ENCODE measurements at regions of chr17 and their contacts with region 1.

Region 1: DNA sequence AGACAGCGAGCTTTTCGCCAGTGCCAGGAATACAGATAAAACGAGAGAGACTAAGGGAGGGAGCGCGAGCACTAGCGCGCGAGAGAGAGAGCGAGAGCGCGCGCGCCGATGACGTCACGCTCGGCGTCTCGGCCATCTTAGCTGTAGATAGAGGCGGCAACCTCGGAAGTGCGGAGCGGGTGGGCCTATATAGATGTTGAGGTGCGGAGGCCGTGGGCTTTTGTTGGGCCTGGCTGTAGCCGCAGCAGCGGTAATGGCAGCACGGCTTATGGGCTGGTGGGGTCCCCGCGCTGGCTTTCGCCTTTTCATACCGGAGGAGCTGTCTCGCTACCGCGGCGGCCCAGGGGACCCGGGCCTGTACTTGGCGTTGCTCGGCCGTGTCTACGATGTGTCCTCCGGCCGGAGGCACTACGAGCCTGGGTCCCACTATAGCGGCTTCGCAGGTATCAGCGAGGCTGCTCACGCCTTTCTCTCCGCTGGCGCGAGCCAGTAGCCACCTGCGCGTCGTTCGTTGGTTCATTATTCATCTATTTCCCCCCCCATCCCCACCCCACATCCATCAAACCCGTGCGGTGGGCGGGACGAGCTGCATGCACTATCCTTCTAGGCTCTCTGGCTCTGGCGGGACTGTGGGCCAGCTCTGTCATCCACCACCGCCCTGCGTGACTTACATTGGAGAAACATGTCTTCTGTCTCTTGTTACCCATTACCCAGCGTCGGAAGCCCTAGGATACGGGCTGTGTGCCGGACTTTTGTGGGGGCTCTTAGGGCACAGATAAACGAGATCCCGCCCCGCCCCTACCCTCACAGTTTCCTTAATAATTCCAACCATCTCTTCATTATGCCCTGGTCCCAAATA is 795 bp downstream of the CYB5D2 start:
- DNase-seq: peak; percentile 81 to 86
- H3K4me3 ChIP-seq: peak overlapping the region; percentile 89
- H3K27ac ChIP-seq: peak overlapping the region; percentile 98
- H3K4me1 ChIP-seq: peaks cover 14% of the 10 kb centered on the region
- H3K27me3 ChIP-seq: no peaks in the 10 kb centered on the region
- CTCF ChIP-seq: no peak

Region 2: GRCh38 chr17:3004133-3004801 is 1139.5 kb before region 1 on chr17:
- CTCF ChIA-PET with region 1: no interaction called
- POLR2A ChIA-PET with region 1: no interaction called
- intact Hi-C with region 1: no loop called
- DNase-seq: peak; percentile 89 to 99
- H3K4me3 ChIP-seq: peak overlapping the region; percentile 6; the same call in 1 of the 2 replicates
- H3K27ac ChIP-seq: peak overlapping the region; percentile 65
- H3K4me1 ChIP-seq: peaks cover 22% of the 10 kb centered on the region
- H3K27me3 ChIP-seq: no peaks in the 10 kb centered on the region
- CTCF ChIP-seq: no peak

Region 3: GRCh38 chr17:3558603-3559269 is 585.1 kb before region 1 on chr17:
- CTCF ChIA-PET with region 1: no interaction called
- POLR2A ChIA-PET with region 1: no interaction called
- intact Hi-C with region 1: no loop called
- DNase-seq: peak; percentile 57 to 74
- H3K4me3 ChIP-seq: peak overlapping the region; percentile 7; the same call in 1 of the 2 replicates
- H3K27ac ChIP-seq: peak overlapping the region; percentile 60
- H3K4me1 ChIP-seq: peaks cover 29% of the 10 kb centered on the region
- H3K27me3 ChIP-seq: no peaks in the 10 kb centered on the region
- CTCF ChIP-seq: no peak

Region 4: DNA sequence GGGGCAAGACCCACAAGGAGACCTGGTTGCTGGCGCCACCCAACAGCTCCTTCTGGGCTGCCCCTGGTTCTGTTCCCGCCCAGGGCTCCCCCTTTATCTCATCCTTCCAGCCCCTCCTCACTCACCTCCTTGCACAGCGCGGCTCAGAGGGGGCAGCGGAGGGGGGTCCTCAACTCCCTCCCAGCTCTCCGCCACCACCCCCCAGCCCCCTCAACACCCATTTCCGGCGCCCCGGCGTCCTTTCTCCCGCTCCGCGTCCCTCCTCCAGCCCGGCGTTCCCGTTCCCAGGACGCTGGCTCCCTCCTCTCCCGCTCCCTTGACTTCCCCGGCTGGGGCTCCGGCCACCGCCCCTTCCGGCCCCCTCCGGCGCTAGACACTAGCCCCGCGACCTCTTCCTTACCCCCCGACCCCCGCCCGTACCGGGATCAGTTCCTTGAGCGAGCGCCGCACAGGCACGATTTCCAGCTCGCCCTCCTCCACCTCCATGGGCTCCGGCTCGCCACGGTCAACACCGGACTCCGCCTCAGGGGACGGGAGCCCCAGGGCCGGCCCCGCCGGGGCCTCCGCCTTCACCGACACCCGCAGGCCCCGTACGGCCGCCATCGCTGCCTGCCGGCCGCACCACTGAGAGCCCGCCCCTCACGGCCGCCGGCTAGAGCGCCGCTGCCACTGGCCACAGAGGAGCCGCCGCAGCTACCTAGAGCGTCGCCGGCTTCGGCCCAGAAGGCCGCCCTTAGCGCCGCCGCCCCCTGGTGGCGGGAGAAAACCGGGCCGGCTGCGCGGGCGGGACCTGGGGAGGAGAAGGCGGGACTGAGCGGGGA is 298.0 kb before region 1 on chr17 and contains the start of gene NCBP3:
- CTCF ChIA-PET with region 1: interaction called, 3 read pairs
- POLR2A ChIA-PET with region 1: no interaction called
- intact Hi-C with region 1: loop called (anchors 10 kb)
- DNase-seq: peak; percentile 83 to 94
- H3K4me3 ChIP-seq: peak within 1 kb of the TSS; percentile 97
- H3K27ac ChIP-seq: peak within 1 kb of the TSS; percentile 51
- H3K4me1 ChIP-seq: peaks cover 10% of the 10 kb centered on the region
- H3K27me3 ChIP-seq: no peaks in the 10 kb centered on the region
- CTCF ChIP-seq: peak; percentile 95
- total RNA-seq, gene NCBP3: 48.2 and 58.5 TPM in 2 replicates

Region 5: GRCh38 chr17:3935140-3935542 is 208.7 kb before region 1 on chr17:
- CTCF ChIA-PET with region 1: no interaction called
- POLR2A ChIA-PET with region 1: no interaction called
- intact Hi-C with region 1: no loop called
- DNase-seq: peak; percentile 61 to 77
- H3K4me3 ChIP-seq: no peak overlapping the region
- H3K27ac ChIP-seq: no peak overlapping the region
- H3K4me1 ChIP-seq: no peaks in the 10 kb centered on the region
- H3K27me3 ChIP-seq: no peaks in the 10 kb centered on the region
- CTCF ChIP-seq: peak; percentile 78

Region 6: DNA sequence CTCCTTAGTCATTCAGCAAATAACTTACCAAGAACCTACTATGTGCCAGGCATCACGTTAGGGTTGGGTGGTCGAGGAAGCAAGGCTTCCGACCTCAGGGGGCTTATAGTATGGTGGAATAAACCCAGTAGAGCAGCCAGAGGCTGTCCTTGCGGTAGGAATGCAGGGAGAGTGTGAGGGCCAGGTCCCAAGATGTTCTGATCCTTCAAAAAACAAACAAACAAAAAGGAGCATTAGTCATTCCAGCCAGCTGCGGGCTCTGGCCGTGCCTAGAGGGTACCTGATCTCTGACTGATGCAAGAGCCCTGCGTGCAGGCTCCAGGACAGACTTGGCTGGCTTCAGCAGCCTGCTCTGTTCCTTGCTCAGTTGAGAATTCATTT is 17.4 kb after region 1 on chr17:
- CTCF ChIA-PET with region 1: interaction called, 7 read pairs
- POLR2A ChIA-PET with region 1: interaction called, 7 read pairs
- intact Hi-C with region 1: loop called (anchors 1 kb)
- DNase-seq: peak; percentile 91 to 96
- H3K4me3 ChIP-seq: peak overlapping the region; percentile 45
- H3K27ac ChIP-seq: peak overlapping the region; percentile 95
- H3K4me1 ChIP-seq: peaks cover 48% of the 10 kb centered on the region
- H3K27me3 ChIP-seq: no peaks in the 10 kb centered on the region
- CTCF ChIP-seq: peak; percentile 55